OCI-LY7 (cell line): ENCODE measurements at regions of chr2 and their contacts with region 1.

Region 1: GRCh38 chr2:197113275-197113711 is 186.8 kb upstream of the PGAP1 start:
- DNase-seq: peak; percentile 58
- H3K4me3 ChIP-seq: no peak overlapping the region
- H3K27ac ChIP-seq: no peak overlapping the region
- H3K4me1 ChIP-seq: peaks cover 21% of the 10 kb centered on the region
- CTCF ChIP-seq: peak; percentile 97

Region 2: GRCh38 chr2:197011799-197012641 is 101.3 kb before region 1 on chr2:
- CTCF ChIA-PET with region 1: no interaction called
- POLR2A ChIA-PET with region 1: no interaction called
- intact Hi-C with region 1: loop called (anchors 5 kb)
- DNase-seq: peak; percentile 71
- H3K4me3 ChIP-seq: no peak overlapping the region
- H3K27ac ChIP-seq: no peak overlapping the region
- H3K4me1 ChIP-seq: peaks cover 5% of the 10 kb centered on the region
- CTCF ChIP-seq: peak; percentile 98

Region 3: GRCh38 chr2:197152451-197153228 is 39.3 kb after region 1 on chr2:
- CTCF ChIA-PET with region 1: interaction called, 7 read pairs
- POLR2A ChIA-PET with region 1: interaction called, 8 read pairs
- intact Hi-C with region 1: loop called (anchors 5 kb)
- DNase-seq: peak; percentile 94
- H3K4me3 ChIP-seq: peak overlapping the region; percentile 56
- H3K27ac ChIP-seq: peak overlapping the region; percentile 99
- H3K4me1 ChIP-seq: peaks cover 81% of the 10 kb centered on the region
- CTCF ChIP-seq: peak; percentile 64

Region 4: DNA sequence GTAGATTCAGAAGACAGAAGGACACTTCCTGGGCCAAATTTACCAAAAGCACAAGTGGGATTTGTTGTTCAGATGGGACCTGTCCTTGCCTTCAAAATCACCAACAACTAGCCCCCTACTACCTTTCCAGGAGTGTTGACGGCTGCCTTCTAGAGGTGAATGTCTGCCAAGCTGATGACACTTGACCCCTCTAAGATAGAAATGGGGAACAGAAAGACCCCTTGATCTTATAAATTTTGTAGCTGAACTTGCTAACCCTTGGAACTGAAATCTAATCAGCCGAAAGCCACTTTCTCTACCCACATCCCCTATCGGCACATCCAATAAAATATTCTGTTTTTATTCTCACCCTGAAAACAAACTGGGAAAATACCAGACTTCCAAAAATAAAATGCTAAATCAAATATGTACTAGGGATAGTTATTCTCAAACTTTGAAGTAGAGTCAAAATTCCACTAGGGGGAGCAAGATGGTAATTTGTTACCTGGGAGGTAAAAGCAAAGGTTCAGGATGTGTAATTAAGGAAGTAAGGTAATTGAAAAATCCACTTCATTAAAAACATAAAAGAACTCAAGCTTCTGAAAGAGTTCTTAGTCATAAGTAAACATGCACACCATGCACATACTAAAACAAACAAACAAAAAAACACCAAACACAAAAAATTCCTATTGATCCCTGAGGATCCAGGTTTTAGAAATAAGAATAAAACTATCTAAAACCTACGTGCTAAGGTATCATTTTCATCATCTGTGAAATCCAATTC is 78.1 kb after region 1 on chr2:
- CTCF ChIA-PET with region 1: interaction called, 9 read pairs
- POLR2A ChIA-PET with region 1: interaction called, 4 read pairs
- intact Hi-C with region 1: loop called (anchors 2 kb)
- DNase-seq: peak; percentile 83
- H3K4me3 ChIP-seq: no peak overlapping the region
- H3K27ac ChIP-seq: no peak overlapping the region
- H3K4me1 ChIP-seq: peaks cover 33% of the 10 kb centered on the region
- CTCF ChIP-seq: peak; percentile 99

Region 5: GRCh38 chr2:197378494-197379307 is 265.4 kb after region 1 on chr2:
- CTCF ChIA-PET with region 1: interaction called, 3 read pairs
- POLR2A ChIA-PET with region 1: no interaction called
- intact Hi-C with region 1: loop called (anchors 1 kb)
- DNase-seq: peak; percentile 74
- H3K4me3 ChIP-seq: no peak overlapping the region
- H3K27ac ChIP-seq: no peak overlapping the region
- H3K4me1 ChIP-seq: peaks cover 4% of the 10 kb centered on the region
- CTCF ChIP-seq: peak; percentile 96